Astrocyte of the cerebellum (primary cell): ENCODE measurements at regions of chr13 and their contacts with region 1.

Region 1: DNA sequence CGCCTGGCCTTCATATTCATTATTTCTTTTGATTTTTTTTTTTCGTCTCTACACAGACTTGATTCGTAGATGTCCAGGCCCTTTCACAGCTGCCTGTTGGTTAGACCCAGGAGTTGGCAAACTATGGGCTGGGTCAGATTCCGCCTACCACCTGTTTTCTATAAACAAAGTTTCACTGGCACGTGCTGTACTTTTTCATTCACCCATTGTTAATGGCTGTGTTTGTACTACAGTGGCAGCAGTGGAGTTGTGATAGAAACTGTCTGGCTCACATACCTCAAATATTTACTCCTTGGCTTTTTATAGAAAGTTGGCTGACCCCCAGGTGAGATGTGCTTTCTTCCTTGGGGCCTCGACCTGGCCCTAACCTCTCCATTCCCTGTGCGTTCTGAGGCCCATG is 72.9 kb upstream of the TEX29 start:
- DNase-seq: no peak
- H3K4me3 ChIP-seq: no peak overlapping the region
- CTCF ChIP-seq: no peak

Region 2: DNA sequence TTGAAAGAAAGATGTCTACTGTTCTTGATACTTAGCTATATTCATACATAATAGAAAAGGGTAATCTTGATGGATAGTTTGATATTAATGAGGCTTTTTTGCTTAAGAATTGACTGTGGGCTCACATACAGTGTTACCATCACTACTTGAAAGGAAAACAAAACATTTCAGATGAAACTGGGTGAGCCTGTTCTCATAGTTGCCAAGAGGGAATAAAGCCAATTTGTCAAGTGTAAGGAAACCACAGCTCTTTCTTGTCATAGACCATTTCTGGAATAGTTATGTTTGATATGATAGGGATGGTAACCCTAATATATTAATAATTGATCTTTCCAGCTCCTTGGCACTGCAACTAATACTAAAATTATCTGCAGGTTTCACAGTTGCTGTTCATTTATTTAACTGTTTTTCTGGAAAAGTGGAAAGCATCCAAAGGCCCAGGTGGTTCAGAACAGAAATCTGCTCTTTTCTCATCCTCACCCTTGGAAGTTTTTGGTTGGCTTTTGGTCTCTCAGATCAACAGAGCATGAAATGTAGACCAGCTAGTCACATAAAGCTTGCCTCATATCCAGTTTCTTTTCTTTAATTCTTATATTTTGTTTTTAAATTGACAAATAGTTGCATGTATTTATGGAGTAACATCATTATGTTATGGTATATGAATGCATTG is 89.3 kb before region 1 on chr13:
- in situ Hi-C with region 1: loop called (anchors 5 kb)
- DNase-seq: no peak
- H3K4me3 ChIP-seq: no peak overlapping the region
- CTCF ChIP-seq: no peak

Region 3: DNA sequence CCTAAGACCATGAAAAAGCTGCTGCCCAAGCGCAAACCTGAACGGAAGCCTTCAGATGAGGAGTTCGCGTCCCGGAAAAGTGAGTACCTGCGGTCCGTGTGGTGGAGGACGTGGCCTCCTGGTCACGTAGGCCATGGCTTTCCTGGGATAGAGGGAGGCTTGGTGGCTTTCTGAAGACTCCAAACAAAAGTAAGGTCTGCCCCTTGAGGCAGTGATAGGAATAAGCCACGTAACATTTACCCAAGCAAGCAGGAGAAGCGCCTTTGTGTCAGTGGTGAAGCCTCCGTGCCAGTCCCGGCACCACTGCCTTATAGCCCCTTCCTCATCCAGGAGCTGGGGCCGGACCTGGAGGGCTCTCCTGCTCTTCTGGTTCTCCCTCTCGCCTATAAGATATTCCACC is 38.6 kb after region 1 on chr13:
- in situ Hi-C with region 1: loop called (anchors 5 kb)
- DNase-seq: no peak
- H3K4me3 ChIP-seq: no peak overlapping the region
- CTCF ChIP-seq: peak; percentile 8

Region 4: DNA sequence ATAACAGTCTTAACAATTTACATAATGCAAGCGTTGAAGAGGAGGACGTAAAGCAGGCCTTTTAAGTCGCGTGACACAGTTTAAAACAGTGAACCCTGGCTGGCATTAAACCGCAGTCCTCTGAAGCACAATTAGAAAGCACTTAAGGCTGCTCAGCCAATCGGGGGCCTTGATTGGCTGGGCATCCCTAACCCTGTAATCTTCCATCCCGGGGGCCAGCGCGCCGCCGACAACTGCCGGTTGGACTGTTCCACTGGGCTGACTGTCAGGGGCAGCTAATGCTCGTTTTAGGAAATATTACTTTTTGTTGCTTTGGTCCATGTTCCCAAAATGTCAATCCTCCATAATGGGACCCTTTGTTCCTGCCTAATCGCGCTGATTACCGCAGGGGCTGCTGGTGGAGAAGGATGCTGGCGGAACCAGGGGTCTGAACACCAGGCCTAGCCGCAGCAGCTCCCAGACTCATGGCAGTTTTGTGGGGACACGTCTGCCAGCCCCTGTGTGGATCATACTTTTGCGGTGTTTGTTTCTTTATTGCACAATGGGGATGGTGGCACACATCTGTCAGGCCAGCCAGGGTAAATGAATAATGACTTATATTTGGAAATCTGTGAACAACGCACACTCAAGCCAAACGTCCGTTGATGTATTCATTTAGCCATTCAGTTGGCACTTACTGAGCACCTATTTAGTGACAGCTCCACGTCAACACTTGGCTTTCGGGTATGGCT is 1001.5 kb after region 1 on chr13:
- in situ Hi-C with region 1: no loop called
- DNase-seq: no peak
- H3K4me3 ChIP-seq: no peak overlapping the region
- CTCF ChIP-seq: no peak